ENCODE measurements at regions of chr20 and their contacts with region 1.

Region 1: DNA sequence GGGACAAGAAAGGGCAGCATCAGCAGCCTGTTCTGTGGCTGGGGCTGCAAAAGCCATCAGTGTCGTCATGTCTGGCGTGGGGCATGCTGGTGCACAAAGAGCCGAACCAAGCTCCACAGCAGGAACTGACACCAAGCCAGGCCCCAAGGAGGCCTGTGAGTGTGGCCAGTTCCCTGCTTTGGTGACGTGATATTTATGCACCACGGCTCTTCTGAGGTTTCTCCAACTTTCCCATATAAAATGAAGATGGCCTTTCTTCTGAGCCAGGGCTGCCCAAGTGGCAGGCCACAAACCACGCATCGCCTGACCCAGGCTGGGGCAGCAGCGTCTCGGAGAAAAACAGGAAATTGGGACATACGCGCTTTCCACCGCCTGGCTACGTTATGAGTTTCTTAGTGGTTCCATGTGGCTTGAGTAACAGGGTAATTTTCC is 109.9 kb downstream of the RIN2 start:
- DNase-seq: peak in 2 of 35 experiments; percentile 1 to 17
- ATAC-seq: no peak
- H3K4me3 ChIP-seq: no peak overlapping the region
- H3K4me3 Mint-ChIP-seq: no peak overlapping the region
- H3K27ac ChIP-seq: no peak overlapping the region
- H3K27ac Mint-ChIP-seq: no peak overlapping the region
- H3K4me1 ChIP-seq: no peaks in the 10 kb centered on the region
- H3K4me1 Mint-ChIP-seq: no peaks in the 10 kb centered on the region
- H3K27me3 ChIP-seq: peaks cover 0 to 5% of the 10 kb centered on the region in 2 experiments
- H3K27me3 Mint-ChIP-seq: peaks cover 1 to 2% of the 10 kb centered on the region in 2 donors

Region 2: GRCh38 chr20:19849341-19850197 is 18.4 kb before region 1 on chr20:
- CTCF ChIA-PET with region 1: no interaction called
- POLR2A ChIA-PET with region 1: no interaction called
- DNase-seq: no peak
- ATAC-seq: no peak
- H3K4me3 ChIP-seq: no peak overlapping the region
- H3K4me3 Mint-ChIP-seq: no peak overlapping the region
- H3K27ac ChIP-seq: no peak overlapping the region
- H3K27ac Mint-ChIP-seq: no peak overlapping the region
- H3K4me1 ChIP-seq: no peaks in the 10 kb centered on the region
- H3K4me1 Mint-ChIP-seq: no peaks in the 10 kb centered on the region
- H3K27me3 ChIP-seq: peaks cover 0 to 4% of the 10 kb centered on the region in 2 experiments
- H3K27me3 Mint-ChIP-seq: peaks cover 9 to 17% of the 10 kb centered on the region in 2 donors

Region 3: GRCh38 chr20:19885939-19886660 is 18.1 kb after region 1 on chr20:
- CTCF ChIA-PET with region 1: interaction called in 1 of 2 experiments, 11 read pairs
- POLR2A ChIA-PET with region 1: no interaction called
- DNase-seq: no peak
- ATAC-seq: no peak
- H3K4me3 ChIP-seq: no peak overlapping the region
- H3K4me3 Mint-ChIP-seq: no peak overlapping the region
- H3K27ac ChIP-seq: no peak overlapping the region
- H3K27ac Mint-ChIP-seq: no peak overlapping the region
- H3K4me1 ChIP-seq: no peaks in the 10 kb centered on the region
- H3K4me1 Mint-ChIP-seq: no peaks in the 10 kb centered on the region
- H3K27me3 ChIP-seq: peaks cover 0 to 20% of the 10 kb centered on the region in 2 experiments
- H3K27me3 Mint-ChIP-seq: peaks cover 23 to 28% of the 10 kb centered on the region in 2 donors

Region 4: DNA sequence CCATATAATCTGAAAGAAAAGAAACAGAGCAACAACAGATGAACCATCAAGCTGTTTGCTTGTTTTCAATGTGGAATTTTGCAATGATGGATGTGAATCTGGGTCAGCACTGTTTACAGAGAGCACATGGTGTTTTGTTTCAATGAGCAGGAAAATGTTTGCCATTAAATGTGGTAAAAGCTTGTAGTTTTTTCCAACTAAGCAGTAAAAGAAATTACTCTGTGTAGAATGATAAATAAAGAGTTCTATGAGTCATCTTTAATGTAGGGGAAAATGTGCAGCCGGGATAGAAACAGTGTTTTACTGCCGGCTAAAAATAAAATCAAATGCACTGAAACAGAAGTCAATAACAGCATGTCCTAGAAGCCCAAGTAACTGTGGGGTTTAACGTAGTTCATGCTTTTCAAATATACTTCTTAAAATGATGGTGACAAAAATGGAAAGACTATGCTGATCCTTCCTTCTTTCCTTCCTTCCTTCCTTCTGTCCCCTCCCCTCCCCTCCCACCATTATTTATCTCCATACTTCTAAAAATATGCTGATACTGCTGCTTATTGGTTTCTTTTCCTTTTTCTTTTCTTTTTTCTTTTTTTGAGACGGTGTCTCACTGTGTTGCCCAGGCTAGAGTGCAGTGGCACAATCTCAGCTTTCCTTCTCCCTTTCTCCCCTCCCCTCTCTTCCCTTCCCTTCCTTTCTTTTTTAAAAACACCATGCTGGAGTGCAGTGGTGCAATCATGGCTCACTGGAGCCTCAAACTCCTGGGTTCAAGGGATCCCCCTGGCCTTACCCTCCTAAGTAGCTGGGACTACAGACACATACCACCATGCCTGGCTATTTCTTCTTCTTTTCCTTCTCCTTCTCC is 142.9 kb after region 1 on chr20:
- CTCF ChIA-PET with region 1: no interaction called
- POLR2A ChIA-PET with region 1: no interaction called
- DNase-seq: no peak
- ATAC-seq: no peak
- H3K4me3 ChIP-seq: no peak overlapping the region
- H3K4me3 Mint-ChIP-seq: no peak overlapping the region
- H3K27ac ChIP-seq: no peak overlapping the region
- H3K27ac Mint-ChIP-seq: no peak overlapping the region
- H3K4me1 ChIP-seq: no peaks in the 10 kb centered on the region
- H3K4me1 Mint-ChIP-seq: peaks cover 9 to 11% (median 9%) of the 10 kb centered on the region in 3 donors
- H3K27me3 ChIP-seq: peaks cover 0 to 21% of the 10 kb centered on the region in 2 experiments
- H3K27me3 Mint-ChIP-seq: peaks cover 11 to 25% of the 10 kb centered on the region in 2 donors